Right ventricle myocardium inferior (tissue), 1 donor: ENCODE measurements at regions of chr10 and their contacts with region 1.

Region 1: DNA sequence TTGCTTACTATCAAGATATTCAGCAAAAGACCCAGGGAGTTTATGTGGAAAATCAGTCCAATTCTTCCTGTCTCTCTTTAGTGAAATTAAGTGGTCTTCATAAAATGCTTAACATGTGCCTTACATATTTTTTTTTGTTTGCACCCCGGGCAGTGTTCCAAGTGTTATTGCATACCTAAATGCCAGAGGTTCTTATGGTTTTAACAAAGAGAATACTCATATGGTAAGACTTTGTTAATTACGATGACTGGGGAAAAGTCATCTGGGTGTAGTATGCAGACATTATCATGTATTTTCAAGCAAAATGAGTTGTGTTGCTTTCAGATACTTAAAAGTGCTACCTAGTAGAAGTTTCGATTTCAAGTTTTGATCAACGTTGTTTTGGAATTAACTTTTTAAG is 82.6 kb downstream of the PRKG1 start:
- DNase-seq: no peak
- ATAC-seq: no peak

Region 2: GRCh38 chr10:51188008-51188407 is 31.1 kb after region 1 on chr10:
- intact Hi-C with region 1: no loop called
- DNase-seq: no peak
- ATAC-seq: no peak

Region 3: DNA sequence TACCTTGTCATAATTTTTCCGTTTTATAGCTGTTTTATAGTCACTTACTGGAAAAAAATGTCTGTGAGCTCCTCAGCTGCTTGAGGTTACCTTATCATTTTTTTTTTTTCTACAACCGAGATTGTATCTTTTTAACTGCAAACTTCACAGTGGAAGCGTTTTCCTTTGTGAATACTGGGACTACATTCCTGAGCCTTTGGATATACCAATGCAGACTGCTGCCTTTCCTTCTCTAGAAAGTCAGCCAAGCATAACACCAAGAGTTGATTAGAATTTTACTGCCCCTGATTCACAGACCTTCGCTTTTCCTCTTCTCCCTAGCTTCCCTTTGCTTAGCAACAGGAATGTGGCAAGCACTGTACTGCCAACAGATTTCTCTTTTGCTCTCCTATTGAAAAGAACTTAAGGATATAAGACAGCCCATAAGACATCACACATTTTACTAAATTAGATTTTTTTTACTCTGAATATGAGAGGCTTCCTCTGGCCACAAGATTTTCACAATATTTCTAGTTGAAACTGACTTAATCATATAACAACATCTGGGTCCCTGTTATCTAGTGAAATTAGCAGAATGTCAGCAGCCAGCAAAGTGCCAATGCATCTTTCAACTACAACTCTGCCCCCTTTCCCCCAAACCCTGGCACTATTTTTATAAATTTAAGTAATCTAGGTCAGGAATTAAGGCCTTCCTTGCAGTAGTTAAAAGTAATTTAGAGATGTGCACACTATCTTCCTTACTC is 88.0 kb after region 1 on chr10:
- intact Hi-C with region 1: loop called (anchors 5 kb)
- DNase-seq: no peak
- ATAC-seq: peak; percentile 82